ENCODE measurements at regions of chr1 and their contacts with region 1.

Region 1: GRCh38 chr1:169288011-169288414 is 79.6 kb downstream of the NME7 start:
- DNase-seq: peak; percentile 77
- H3K4me3 ChIP-seq: no peak overlapping the region
- H3K27ac ChIP-seq: no peak overlapping the region
- H3K4me1 ChIP-seq: peaks cover 10% of the 10 kb centered on the region
- H3K27me3 ChIP-seq: no peaks in the 10 kb centered on the region
- CTCF ChIP-seq: no peak

Region 2: DNA sequence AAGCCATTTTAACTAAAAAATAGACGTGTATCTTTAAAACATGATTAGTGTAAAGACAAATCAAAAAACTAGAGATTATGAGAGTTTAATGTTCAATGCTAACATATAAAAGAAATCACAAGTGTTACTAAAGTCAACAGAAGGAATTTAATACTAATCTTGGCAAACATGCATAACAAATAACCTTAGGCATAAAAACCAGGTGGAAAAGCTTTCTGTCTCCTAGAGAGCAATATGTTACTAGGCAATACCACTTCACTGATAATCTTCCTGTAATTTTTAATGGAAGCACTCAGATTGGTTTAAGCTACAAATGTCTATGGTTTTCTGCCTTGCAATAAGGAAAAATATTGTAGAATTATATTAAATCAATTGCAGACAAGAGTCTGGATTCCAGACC is 42.3 kb before region 1 on chr1:
- CTCF ChIA-PET with region 1: no interaction called
- POLR2A ChIA-PET with region 1: no interaction called
- intact Hi-C with region 1: loop called (anchors 5 kb)
- DNase-seq: no peak
- H3K4me3 ChIP-seq: no peak overlapping the region
- H3K27ac ChIP-seq: no peak overlapping the region
- H3K4me1 ChIP-seq: no peaks in the 10 kb centered on the region
- H3K27me3 ChIP-seq: no peaks in the 10 kb centered on the region
- CTCF ChIP-seq: no peak

Measured in A673 (cell line).